Activated T-helper 2 cell treated with anti-CD3 and anti-CD28 coated beads, Interferon-gamma antibody, Interleukin-2, Interleukin-4, amounts not matched to agents 10 μg/mL and 5 μg/mL and 100 μg/mL, durations not matched to agents 14 hours and 24 hours and 36 hours (primary cell): ENCODE measurements at regions of chr13 and their contacts with region 1.

Region 1: GRCh38 chr13:29707876-29708543 is 112.5 kb upstream of the SLC7A1 start:
- DNase-seq: peak; percentile 28
- H3K4me3 Mint-ChIP-seq: no peak overlapping the region
- H3K27ac Mint-ChIP-seq: no peak overlapping the region
- H3K4me1 Mint-ChIP-seq: no peaks in the 10 kb centered on the region
- H3K27me3 Mint-ChIP-seq: peaks cover 26% of the 10 kb centered on the region

Region 2: DNA sequence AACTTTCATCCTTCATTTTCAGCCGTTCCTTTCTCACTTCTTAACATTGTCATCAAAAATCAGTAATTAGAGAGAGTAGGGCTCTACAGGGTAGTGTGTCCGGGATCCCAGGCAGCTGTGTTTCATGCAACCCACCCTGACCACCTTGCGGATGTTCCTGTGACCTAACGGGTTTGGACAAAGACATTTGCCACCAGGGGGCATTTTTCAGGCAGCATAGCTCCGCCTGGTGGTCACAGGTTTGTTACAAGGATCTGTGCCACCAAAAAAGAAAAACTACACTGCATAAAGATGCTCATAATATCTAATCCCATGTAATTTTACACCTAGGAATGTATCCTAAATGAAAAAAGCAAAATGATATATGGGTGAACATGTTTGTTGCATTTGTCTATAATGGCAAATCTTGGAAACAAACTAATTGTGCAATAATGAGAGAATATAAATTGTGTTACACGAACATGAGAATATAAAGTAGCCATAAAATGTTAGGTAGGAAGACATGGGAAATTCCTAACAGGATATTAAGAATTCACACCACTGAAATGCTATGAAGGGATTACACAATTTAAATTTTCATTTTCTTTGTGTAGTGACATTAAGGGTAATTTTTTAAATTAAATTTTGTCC is 235.6 kb before region 1 on chr13:
- intact Hi-C with region 1: loop called (anchors 10 kb)
- DNase-seq: peak; percentile 19
- H3K4me3 Mint-ChIP-seq: no peak overlapping the region
- H3K27ac Mint-ChIP-seq: no peak overlapping the region
- H3K4me1 Mint-ChIP-seq: peaks cover 1% of the 10 kb centered on the region
- H3K27me3 Mint-ChIP-seq: peaks cover 16% of the 10 kb centered on the region

Region 3: DNA sequence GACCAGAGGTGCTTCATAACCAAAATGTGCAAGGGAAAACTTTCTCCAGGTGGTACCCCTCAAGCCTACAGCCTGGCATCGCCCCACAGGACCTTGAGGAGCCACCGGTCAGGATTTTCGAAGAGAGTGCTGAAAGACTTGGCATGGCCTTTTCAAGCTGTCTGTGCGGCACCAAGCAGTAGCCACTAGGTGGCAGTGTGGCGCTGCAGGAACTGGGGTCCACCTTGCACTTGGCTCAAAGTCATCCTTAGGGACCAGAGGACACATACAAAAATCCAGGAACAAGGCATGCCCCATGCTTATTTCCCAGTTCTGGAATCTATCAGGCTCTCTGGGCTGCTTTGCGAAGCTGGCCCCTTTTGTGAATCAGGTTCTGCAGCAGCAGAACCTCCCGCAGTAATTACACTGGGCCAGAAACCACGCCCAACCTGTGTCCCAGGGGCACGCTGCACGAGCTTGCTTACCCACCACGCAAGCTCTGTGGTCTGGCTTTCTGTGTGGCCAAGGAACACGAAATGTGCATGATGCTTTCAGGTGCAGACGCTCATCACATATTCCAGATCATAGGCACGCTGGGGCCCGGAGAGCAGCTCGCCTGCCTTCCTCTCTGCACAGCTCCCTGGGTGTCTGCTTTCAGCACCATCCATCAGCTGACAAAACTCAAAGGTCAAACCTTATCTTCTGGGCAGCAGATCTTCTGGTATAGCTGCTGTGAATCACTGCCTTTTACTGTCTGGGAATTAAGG is 199.7 kb before region 1 on chr13:
- intact Hi-C with region 1: loop called (anchors 1 kb)
- DNase-seq: peak; percentile 54
- H3K4me3 Mint-ChIP-seq: no peak overlapping the region
- H3K27ac Mint-ChIP-seq: no peak overlapping the region
- H3K4me1 Mint-ChIP-seq: peaks cover 7% of the 10 kb centered on the region
- H3K27me3 Mint-ChIP-seq: peaks cover 3% of the 10 kb centered on the region

Region 4: GRCh38 chr13:29625017-29625416 is 83.0 kb before region 1 on chr13:
- intact Hi-C with region 1: no loop called
- DNase-seq: no peak
- H3K4me3 Mint-ChIP-seq: no peak overlapping the region
- H3K27ac Mint-ChIP-seq: no peak overlapping the region
- H3K4me1 Mint-ChIP-seq: no peaks in the 10 kb centered on the region
- H3K27me3 Mint-ChIP-seq: peaks cover 36% of the 10 kb centered on the region

Region 5: DNA sequence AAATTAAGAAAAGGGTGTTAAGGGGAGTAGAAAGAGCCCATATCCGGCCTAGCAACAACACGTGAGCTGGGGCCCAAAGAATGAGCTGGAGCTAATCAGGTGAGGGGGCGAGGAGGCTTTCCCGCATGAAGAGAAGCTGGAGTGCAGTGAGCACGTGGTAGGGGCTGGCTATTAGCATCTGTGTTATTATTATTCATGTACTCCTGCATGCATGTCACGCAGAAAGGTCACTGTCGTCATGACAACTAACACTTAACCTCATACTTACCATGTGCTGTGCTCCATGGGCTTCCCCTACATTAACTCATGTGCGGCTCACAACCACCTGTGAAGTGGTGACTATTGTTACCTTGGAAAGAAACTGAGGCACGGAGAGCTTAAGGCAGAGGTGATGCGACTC is 370.0 kb after region 1 on chr13:
- intact Hi-C with region 1: no loop called
- DNase-seq: no peak
- H3K4me3 Mint-ChIP-seq: no peak overlapping the region
- H3K27ac Mint-ChIP-seq: no peak overlapping the region
- H3K4me1 Mint-ChIP-seq: no peaks in the 10 kb centered on the region
- H3K27me3 Mint-ChIP-seq: peaks cover 4% of the 10 kb centered on the region